ENCODE measurements at regions of chr4 and their contacts with region 1.

Region 1: DNA sequence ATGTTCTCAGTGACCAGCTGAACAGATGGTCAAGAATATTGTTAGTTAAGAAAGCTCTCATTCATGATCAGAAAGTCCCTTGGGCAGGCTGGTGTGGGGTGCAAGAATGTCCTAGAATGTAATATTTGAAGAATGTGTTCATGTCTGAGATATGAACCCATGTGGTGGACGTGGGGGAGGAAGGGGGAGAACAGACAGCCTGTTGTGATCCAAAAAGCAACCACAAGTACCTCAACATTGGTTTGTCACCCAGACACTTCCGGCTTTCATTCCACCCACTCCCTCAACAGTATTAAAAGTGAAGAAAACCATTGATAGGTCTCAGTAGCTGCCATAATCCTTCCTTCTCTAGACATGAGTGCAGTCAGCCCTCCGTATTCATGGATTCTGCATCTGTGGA is 82.2 kb downstream of the MAML3 start:
- DNase-seq: peak; percentile 79
- H3K4me3 Mint-ChIP-seq: peak overlapping the region; percentile 53
- H3K27ac Mint-ChIP-seq: peak overlapping the region; percentile 91
- H3K4me1 Mint-ChIP-seq: peaks cover 57% of the 10 kb centered on the region
- H3K27me3 Mint-ChIP-seq: peaks cover 12% of the 10 kb centered on the region

Region 2: DNA sequence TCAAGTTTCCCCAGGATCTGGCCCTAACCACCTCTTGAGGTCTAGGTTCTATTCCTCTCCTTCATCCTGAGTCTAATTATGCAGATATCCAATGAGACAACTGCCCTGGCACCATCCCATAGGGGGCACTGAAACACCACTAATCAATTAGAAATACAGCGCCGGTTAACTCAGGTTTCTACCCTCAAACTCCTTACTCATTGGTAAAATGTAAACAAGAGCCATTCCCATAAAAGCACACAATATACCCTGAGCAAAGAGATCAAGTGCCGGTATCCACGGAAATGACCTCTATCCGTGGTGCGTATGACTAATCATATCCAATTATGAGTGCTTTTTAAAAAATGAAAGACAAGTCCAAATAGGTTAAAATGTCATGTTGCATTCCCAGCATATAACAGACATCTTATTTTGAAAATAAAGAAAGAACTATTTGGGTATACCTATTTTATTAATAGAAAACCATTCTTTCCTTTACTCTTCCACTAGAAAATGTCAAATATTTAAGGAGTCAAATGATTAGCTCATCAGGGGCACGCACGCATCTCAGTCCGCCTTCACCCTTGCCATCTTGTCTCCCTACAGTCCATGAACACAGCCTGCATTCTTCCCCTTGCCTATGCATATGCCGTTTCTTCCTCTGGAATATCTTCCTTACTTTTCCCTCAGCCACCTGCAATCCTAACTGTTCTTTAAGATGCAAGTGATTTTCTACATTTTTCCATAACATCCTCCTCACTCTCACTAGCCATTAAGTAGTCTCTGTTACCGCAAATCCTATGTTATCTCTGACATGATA is 58.9 kb before region 1 on chr4:
- CTCF ChIA-PET with region 1: no interaction called
- POLR2A ChIA-PET with region 1: interaction called, 10 read pairs
- DNase-seq: peak; percentile 69
- H3K4me3 Mint-ChIP-seq: no peak overlapping the region
- H3K27ac Mint-ChIP-seq: no peak overlapping the region
- H3K4me1 Mint-ChIP-seq: peaks cover 8% of the 10 kb centered on the region
- H3K27me3 Mint-ChIP-seq: peaks cover 10% of the 10 kb centered on the region

Region 3: DNA sequence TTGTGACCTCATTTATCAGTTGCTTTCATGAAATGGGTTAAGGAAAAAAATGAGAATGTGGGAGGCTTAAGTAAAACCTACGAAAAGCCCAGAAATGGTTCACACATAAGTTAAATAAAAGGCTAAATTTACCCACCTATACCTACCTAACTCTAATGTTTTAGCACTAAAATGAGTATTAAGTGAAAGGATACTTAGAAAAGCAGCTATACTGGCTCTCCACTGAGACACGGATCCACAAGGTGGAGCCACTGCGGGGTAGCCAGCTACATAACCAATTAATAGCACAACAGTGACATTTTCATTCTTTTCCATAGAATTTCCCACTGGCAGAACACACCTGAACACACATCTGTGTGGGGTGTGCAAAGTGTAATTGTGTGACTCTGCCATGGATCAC is 19.8 kb before region 1 on chr4:
- CTCF ChIA-PET with region 1: interaction called, 11 read pairs
- POLR2A ChIA-PET with region 1: no interaction called
- DNase-seq: peak; percentile 50
- H3K4me3 Mint-ChIP-seq: no peak overlapping the region
- H3K27ac Mint-ChIP-seq: no peak overlapping the region
- H3K4me1 Mint-ChIP-seq: peaks cover 61% of the 10 kb centered on the region
- H3K27me3 Mint-ChIP-seq: peaks cover 20% of the 10 kb centered on the region